Posterior cingulate gyrus (tissue), 11 donors: ENCODE measurements at regions of chr21 and their contacts with region 1.

Region 1: DNA sequence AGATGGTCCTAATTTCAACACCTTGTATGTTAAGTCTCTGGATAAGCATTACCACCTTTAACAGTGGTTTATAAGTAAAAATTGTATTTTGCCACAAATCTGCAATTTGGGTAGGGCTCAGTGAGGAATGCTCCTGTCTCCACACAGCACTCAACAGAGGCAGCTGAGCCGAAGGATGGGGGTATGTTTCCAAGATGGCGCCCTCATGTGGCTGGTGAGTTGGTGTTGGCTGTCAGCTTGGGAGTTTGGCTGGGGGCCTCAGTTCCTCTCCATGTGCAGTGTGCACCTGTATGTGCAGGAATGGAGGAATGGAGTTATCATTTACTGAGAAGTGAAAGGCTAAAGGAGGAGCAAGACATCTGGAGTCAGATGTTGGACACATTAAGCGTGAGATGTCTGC is 136.8 kb downstream of the GABPA start:
- DNase-seq: no peak

Region 2: DNA sequence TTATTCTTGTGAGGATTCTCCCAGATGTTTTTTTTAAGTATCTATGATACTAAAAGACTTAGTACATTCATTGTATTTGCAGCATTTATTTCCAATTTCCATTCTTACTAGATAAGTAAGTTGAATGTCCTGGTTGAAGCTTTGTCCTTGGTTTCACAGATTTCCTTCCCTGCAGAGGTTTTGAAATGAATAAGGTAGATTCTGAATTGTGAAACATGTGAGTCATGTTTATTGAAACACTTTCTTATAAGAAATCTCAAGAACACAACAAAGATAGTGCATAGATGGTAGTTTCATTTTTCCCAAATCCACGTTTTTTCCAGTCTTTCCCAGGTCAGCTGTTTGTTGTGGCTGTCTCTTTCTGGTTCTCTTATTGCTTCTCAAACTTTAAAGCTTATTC is 112.0 kb before region 1 on chr21:
- intact Hi-C with region 1: no loop called
- DNase-seq: no peak

Region 3: GRCh38 chr21:25790122-25790877 is 81.3 kb before region 1 on chr21:
- intact Hi-C with region 1: loop called (anchors 10 kb)
- DNase-seq: peak in 1 of 10 donors; percentile 65